Stomach (tissue), 19 donors: ENCODE measurements at regions of chr11 and their contacts with region 1.

Region 1: GRCh38 chr11:45110562-45110961 is 35.9 kb upstream of the PRDM11 start:
- DNase-seq: peak; percentile 48 to 88
- H3K4me3 ChIP-seq: no peak overlapping the region
- H3K27ac ChIP-seq: no peak overlapping the region
- H3K4me1 ChIP-seq: no peaks in the 10 kb centered on the region
- H3K27me3 ChIP-seq: peaks cover 0 to 23% (median 0%) of the 10 kb centered on the region in 3 donors
- CTCF ChIP-seq: peak in 5 of 7 experiments; percentile 56 to 81 (median 75)
- EP300 ChIP-seq: no peak
- POLR2A ChIP-seq: no peak

Region 2: GRCh38 chr11:45180843-45181266 is 70.3 kb after region 1 on chr11:
- intact Hi-C with region 1: no loop called
- DNase-seq: peak; percentile 71 to 93
- H3K4me3 ChIP-seq: peak overlapping the region; percentile 61 to 70 (median 64)
- H3K27ac ChIP-seq: peak overlapping the region; percentile 72 to 93 (median 88)
- H3K4me1 ChIP-seq: peaks cover 21 to 63% (median 39%) of the 10 kb centered on the region in 4 donors
- H3K27me3 ChIP-seq: peaks cover 0 to 3% (median 0%) of the 10 kb centered on the region in 3 donors
- CTCF ChIP-seq: no peak
- EP300 ChIP-seq: no peak
- POLR2A ChIP-seq: no peak

Region 3: GRCh38 chr11:45319077-45319476 is 208.5 kb after region 1 on chr11:
- intact Hi-C with region 1: no loop called
- DNase-seq: no peak
- H3K4me3 ChIP-seq: no peak overlapping the region
- H3K27ac ChIP-seq: no peak overlapping the region
- H3K4me1 ChIP-seq: no peaks in the 10 kb centered on the region
- H3K27me3 ChIP-seq: peaks cover 0 to 22% (median 5%) of the 10 kb centered on the region in 3 donors
- CTCF ChIP-seq: no peak
- EP300 ChIP-seq: no peak
- POLR2A ChIP-seq: no peak

Region 4: GRCh38 chr11:45332276-45332934 is 221.8 kb after region 1 on chr11:
- intact Hi-C with region 1: loop called (anchors 5 kb)
- DNase-seq: peak; percentile 45 to 78
- H3K4me3 ChIP-seq: peak overlapping the region in 2 of 4 donors; percentile 14 to 23
- H3K27ac ChIP-seq: peak overlapping the region in 4 of 5 donors; percentile 51 to 70 (median 56)
- H3K4me1 ChIP-seq: peaks cover 8 to 17% (median 12%) of the 10 kb centered on the region in 4 donors
- H3K27me3 ChIP-seq: no peaks in the 10 kb centered on the region
- CTCF ChIP-seq: peak in 4 of 7 experiments; percentile 34 to 90 (median 81)
- EP300 ChIP-seq: no peak
- POLR2A ChIP-seq: no peak